Activated naive CD4-positive, alpha-beta T cell treated with anti-CD3 and anti-CD28 coated beads for 36 hours (primary cell): ENCODE measurements at regions of chr2 and their contacts with region 1.

Region 1: DNA sequence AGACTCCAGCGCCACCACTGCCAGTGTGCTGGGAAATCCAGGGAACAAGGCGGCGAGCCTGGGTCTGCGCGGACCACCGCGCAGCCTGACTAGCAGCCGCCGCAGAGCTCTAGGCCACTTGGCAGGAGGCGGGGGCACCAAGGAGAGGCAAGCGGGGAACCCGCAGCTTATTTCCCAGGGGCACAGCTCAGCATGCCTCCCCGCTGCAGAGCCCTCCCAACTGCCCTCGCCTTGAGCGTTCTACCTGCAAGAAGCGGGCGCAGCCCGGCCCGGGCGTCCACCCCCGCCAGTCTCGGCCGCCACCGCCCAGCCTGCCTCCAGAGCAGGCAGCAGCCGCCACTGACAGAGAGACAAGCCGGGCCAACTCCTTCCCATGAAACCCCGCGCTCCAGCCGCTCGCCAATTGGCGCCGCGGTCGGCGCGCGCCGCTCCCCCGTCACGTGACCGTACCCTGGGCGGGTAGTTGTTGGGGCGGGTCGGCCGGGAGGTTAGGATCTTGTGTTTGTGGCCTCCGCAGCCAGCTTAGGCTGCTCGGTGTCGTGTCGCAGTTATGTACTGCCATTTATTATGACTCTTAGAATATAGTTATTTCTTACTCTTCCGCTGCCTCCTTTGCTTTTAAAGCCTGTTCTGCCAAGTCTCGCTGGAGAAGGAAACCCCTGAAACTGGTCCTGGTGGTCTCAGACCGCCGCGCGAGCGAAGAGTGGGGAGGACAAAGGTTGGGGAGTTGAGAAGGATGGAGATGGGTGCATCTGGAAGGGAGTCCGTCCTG is at the start of gene LNPK:
- DNase-seq: peak; percentile 93
- H3K4me3 Mint-ChIP-seq: peak within 1 kb of the TSS; percentile 88
- H3K27ac Mint-ChIP-seq: peak within 1 kb of the TSS; percentile 68
- H3K4me1 Mint-ChIP-seq: peaks cover 17% of the 10 kb centered on the region
- H3K27me3 Mint-ChIP-seq: no peaks in the 10 kb centered on the region
- total RNA-seq, gene LNPK: 22.2 to 23.9 TPM

Region 2: GRCh38 chr2:174682578-174683391 is 1319.3 kb before region 1 on chr2:
- CTCF ChIA-PET with region 1: no interaction called
- intact Hi-C with region 1: loop called (anchors 5 kb)
- DNase-seq: peak; percentile 49
- H3K4me3 Mint-ChIP-seq: peak overlapping the region; percentile 84
- H3K27ac Mint-ChIP-seq: peak overlapping the region; percentile 83
- H3K4me1 Mint-ChIP-seq: peaks cover 50% of the 10 kb centered on the region
- H3K27me3 Mint-ChIP-seq: no peaks in the 10 kb centered on the region

Region 3: GRCh38 chr2:175181104-175181876 is 820.8 kb before region 1 on chr2 and contains the start of gene ATP5MC3:
- CTCF ChIA-PET with region 1: no interaction called
- intact Hi-C with region 1: loop called (anchors 5 kb)
- DNase-seq: peak; percentile 95
- H3K4me3 Mint-ChIP-seq: peak within 1 kb of the TSS; percentile 94
- H3K27ac Mint-ChIP-seq: peak within 1 kb of the TSS; percentile 85
- H3K4me1 Mint-ChIP-seq: peaks cover 29% of the 10 kb centered on the region
- H3K27me3 Mint-ChIP-seq: no peaks in the 10 kb centered on the region
- total RNA-seq, gene ATP5MC3: 308 to 310 TPM

Region 4: DNA sequence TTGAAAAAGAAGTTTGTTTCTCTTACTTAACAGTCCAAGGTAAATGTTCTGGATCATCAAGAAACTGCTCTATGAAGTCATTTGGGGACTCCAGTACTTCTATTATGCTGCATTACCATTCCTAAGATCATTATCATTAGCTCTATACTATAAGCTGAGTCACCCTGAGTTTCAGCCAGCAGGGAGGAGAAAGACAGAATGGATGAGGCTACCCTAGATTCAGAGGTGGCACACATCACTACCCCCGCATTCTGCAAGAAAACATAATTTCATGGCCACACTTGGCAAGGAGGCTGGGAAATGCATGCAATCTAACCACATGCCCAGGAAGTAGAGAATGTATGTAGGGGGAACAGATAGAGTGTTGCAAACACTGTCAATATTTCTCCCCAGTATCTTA is 16.6 kb after region 1 on chr2:
- CTCF ChIA-PET with region 1: no interaction called
- intact Hi-C with region 1: no loop called
- DNase-seq: no peak
- H3K4me3 Mint-ChIP-seq: no peak overlapping the region
- H3K27ac Mint-ChIP-seq: no peak overlapping the region
- H3K4me1 Mint-ChIP-seq: no peaks in the 10 kb centered on the region
- H3K27me3 Mint-ChIP-seq: peaks cover 16% of the 10 kb centered on the region

Region 5: DNA sequence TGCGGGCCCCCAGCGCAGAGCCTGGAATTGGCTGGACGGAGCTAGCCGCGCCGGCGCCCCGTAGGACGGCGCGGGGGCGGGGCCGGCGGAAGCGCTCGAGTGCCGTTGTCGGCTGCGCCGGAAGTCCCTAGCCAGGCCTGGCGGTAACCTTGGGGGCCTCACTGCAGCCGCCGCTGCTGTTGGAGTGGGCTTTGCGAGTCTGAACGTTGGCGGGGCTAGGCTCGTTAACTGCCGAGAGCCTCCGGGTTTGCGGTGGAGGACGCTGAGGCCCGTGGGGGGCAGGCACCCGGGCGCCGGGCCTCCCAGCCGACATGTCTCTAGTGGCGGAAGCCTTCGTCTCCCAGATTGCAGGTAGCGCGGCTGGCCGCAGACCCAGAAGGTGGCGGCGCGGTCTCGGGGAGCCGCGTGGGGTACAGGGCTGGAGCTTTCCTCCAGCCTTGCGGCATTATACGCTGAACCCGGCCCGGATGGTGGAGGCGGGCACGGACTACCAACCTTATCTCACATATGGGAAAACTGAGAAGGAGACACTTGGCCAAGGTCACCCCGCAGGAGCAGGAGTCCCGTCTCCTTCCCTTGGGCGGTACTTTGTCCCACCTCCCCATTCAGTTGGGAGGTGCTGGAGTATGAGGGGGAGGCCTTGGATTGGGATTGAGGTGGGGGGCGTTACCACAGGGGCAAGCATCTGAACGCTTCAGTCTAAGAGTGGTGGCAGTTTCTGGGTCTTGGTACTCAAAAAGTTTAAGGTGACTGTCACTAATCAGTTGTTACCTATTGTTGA is 267.4 kb after region 1 on chr2 and contains the start of gene MTX2:
- CTCF ChIA-PET with region 1: no interaction called
- intact Hi-C with region 1: loop called (anchors 2 kb)
- DNase-seq: peak; percentile 76
- H3K4me3 Mint-ChIP-seq: peak within 1 kb of the TSS; percentile 97
- H3K27ac Mint-ChIP-seq: peak within 1 kb of the TSS; percentile 88
- H3K4me1 Mint-ChIP-seq: peaks cover 20% of the 10 kb centered on the region
- H3K27me3 Mint-ChIP-seq: no peaks in the 10 kb centered on the region
- total RNA-seq, gene MTX2: 24.3 to 28.1 TPM

Region 6: DNA sequence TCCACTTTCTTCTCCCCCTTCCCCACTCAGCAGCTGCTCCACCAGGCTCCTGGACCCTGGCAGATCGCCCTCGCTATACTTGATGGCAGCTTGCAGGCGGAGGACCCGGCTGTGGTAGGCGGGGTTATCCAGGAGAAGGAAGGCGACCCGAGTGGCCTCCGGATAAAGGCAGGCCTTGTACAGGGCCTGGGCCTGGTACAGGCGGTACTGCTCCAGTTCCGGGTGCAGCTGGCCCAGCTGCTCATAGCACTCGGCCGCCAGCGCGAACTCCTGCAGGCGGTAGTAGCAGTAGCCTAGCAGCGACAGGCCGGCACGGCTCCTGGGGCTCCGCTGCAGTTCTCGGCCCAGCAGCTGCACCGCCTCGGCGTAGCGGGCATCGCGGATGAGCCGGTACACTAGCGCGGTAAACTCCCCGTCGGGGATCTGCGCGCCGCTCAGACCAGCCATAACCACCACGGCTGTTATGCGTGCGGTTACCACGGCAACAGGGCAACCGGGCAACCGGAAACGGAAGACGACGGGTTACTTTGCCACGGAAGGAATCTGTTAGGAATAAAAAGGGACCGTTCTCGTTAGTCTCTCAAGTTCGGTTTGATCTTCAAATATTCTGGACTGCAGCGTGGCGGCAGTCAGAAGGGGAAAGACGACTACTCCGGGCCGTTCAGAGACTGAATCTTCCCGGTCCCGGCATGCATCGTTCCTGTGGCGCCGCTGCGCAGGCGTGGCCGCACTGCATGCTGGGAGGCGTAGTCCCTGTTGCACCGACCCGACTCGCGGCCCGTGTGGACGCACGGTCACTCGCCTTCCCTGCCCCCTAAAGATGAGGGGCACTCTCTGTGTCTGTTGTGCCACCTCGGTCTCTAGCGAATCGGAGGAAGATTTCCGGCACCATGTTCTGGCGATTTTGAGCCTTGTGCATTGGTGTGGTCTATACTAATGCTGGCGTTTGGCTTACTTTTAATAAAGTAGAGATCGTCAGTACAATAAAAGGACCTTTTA is 1616.5 kb after region 1 on chr2:
- CTCF ChIA-PET with region 1: no interaction called
- intact Hi-C with region 1: loop called (anchors 2 kb)
- DNase-seq: peak; percentile 95
- H3K4me3 Mint-ChIP-seq: peak overlapping the region; percentile 93
- H3K27ac Mint-ChIP-seq: peak overlapping the region; percentile 96
- H3K4me1 Mint-ChIP-seq: peaks cover 3% of the 10 kb centered on the region
- H3K27me3 Mint-ChIP-seq: no peaks in the 10 kb centered on the region